HepG2 (cell line): ENCODE measurements at regions of chr15 and their contacts with region 1.

Region 1: GRCh38 chr15:90902040-90902839 is 862 bp upstream of the MAN2A2 start:
- DNase-seq: peak; percentile 64
- ATAC-seq: peak; percentile 85
- H3K4me3 ChIP-seq: peak overlapping the region; percentile 71 to 89 (median 81)
- H3K27ac ChIP-seq: peak overlapping the region; percentile 64
- H3K4me1 ChIP-seq: peaks cover 20% of the 10 kb centered on the region
- H3K27me3 ChIP-seq: peaks cover 0 to 1% of the 10 kb centered on the region in 2 experiments; a peak in 1 of 5 replicates
- CTCF ChIP-seq: peak; percentile 90
- EP300 ChIP-seq: no peak
- POLR2A ChIP-seq: peak; percentile 37 to 39; a peak in 2 of 4 replicates
- RAD21 ChIP-seq: peak; percentile 52; the same call in 1 of the 2 replicates

Region 2: DNA sequence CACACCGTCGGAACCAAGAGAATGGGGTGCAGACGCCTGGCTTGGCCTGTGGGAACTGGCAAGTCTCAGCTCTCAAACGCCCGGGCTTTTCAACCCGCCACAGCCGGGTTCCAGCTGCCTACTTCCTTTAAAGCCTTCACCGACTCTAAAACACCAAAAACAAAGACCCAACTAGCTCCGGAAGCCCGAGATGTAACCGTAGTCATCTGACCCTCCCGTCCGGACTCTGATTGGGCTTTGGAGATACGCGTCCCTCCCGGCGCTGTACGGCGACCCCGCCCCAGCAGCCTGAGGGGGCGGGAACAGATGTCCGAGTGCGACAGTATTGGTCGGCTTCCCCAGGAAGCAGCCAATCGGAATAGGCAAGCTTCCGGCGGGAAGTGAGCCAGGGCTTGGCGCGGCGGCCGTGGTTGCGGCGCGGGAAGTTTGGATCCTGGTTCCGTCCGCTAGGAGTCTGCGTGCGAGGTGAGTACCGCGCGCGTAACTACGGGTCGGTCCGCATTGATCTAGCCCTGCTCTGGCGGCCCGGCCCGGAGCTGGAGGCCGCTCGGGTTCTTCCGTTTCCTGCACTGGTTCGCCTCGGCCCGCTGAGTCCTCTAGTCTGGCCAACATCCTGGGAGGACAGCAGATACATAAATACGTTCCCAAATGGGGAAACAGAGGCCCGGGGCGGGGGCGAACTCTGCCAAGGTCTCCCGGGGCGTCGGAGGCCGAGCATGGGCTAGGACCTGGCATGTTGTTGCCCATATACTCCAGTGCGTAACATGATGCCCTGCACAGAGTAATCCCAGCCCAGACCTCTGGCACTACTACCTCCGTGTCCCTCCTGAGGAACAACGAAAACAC is 185.0 kb before region 1 on chr15 and contains the start of gene BLM:
- CTCF ChIA-PET with region 1: no interaction called
- POLR2A ChIA-PET with region 1: interaction called, 3 read pairs
- in situ Hi-C with region 1: no loop called
- intact Hi-C with region 1: loop called (anchors 1 kb)
- DNase-seq: peak; percentile 95
- ATAC-seq: peak; percentile 99
- H3K4me3 ChIP-seq: peak within 1 kb of the TSS; percentile 82 to 97 (median 94)
- H3K27ac ChIP-seq: peak within 1 kb of the TSS; percentile 78
- H3K4me1 ChIP-seq: peaks cover 28% of the 10 kb centered on the region
- H3K27me3 ChIP-seq: no peaks in the 10 kb centered on the region; a peak in 1 of 5 replicates
- CTCF ChIP-seq: peak; percentile 49
- EP300 ChIP-seq: no peak
- POLR2A ChIP-seq: peak; percentile 67 to 85
- RAD21 ChIP-seq: no peak
- total RNA-seq, gene BLM: 11.8 and 17.4 TPM in 2 replicates

Region 3: GRCh38 chr15:90750186-90750585 is 152.1 kb before region 1 on chr15:
- CTCF ChIA-PET with region 1: no interaction called
- POLR2A ChIA-PET with region 1: no interaction called
- in situ Hi-C with region 1: no loop called
- intact Hi-C with region 1: no loop called
- DNase-seq: no peak
- ATAC-seq: no peak
- H3K4me3 ChIP-seq: no peak overlapping the region
- H3K27ac ChIP-seq: no peak overlapping the region
- H3K4me1 ChIP-seq: peaks cover 10% of the 10 kb centered on the region
- H3K27me3 ChIP-seq: no peaks in the 10 kb centered on the region
- CTCF ChIP-seq: no peak
- EP300 ChIP-seq: no peak
- POLR2A ChIP-seq: no peak
- RAD21 ChIP-seq: no peak

Region 4: DNA sequence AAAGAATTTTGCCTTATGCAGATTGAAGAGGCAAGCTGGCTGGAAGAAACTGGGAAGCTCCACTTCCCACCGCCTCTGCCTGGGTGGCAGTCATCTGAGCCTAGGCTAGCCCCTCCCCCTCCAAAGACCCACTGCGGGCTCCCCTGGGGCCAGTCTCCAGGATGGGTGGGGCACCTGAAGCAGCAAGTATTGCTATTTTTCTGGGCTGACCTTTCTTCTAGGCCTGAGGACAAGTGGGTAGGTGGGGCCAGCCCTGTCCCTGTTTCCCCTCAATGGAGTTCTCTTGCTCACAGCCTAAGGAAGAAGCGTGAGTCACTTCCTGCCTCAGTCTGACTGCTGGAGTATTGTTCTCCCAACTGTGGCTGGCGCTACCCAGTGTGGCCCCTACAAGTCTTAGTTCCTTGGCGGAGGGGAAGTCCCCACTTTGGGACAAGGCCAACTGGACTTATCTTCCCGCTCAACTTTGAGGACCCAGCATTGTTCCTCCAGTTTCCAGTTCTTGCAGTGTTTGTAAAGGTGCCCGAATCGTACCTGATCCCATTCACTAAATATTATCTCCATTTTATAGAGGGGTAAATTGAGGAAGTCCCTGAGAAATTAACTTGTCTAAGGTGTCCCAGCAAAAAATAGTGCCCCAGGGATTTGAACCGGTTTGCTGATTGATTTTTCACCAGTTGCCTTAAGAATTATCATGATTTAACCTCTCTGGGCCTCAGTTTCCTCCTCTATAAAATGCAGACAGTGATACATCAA is 32.5 kb before region 1 on chr15:
- CTCF ChIA-PET with region 1: no interaction called
- POLR2A ChIA-PET with region 1: interaction called, 13 read pairs
- in situ Hi-C with region 1: no loop called
- intact Hi-C with region 1: no loop called
- DNase-seq: no peak
- ATAC-seq: no peak
- H3K4me3 ChIP-seq: no peak overlapping the region; a peak in 1 of 6 replicates
- H3K27ac ChIP-seq: no peak overlapping the region
- H3K4me1 ChIP-seq: peaks cover 75% of the 10 kb centered on the region
- H3K27me3 ChIP-seq: peaks cover 0 to 49% of the 10 kb centered on the region in 2 experiments
- CTCF ChIP-seq: no peak
- EP300 ChIP-seq: no peak
- POLR2A ChIP-seq: no peak
- RAD21 ChIP-seq: no peak

Region 5: GRCh38 chr15:90946538-90946937 is 44.3 kb after region 1 on chr15:
- CTCF ChIA-PET with region 1: no interaction called
- POLR2A ChIA-PET with region 1: no interaction called
- in situ Hi-C with region 1: no loop called
- intact Hi-C with region 1: no loop called
- DNase-seq: no peak
- ATAC-seq: no peak
- H3K4me3 ChIP-seq: no peak overlapping the region
- H3K27ac ChIP-seq: no peak overlapping the region
- H3K4me1 ChIP-seq: no peaks in the 10 kb centered on the region
- H3K27me3 ChIP-seq: no peaks in the 10 kb centered on the region
- CTCF ChIP-seq: no peak
- EP300 ChIP-seq: no peak
- POLR2A ChIP-seq: no peak
- RAD21 ChIP-seq: no peak